Natural killer cell (primary cell): ENCODE measurements at regions of chr18 and their contacts with region 1.

Region 1: DNA sequence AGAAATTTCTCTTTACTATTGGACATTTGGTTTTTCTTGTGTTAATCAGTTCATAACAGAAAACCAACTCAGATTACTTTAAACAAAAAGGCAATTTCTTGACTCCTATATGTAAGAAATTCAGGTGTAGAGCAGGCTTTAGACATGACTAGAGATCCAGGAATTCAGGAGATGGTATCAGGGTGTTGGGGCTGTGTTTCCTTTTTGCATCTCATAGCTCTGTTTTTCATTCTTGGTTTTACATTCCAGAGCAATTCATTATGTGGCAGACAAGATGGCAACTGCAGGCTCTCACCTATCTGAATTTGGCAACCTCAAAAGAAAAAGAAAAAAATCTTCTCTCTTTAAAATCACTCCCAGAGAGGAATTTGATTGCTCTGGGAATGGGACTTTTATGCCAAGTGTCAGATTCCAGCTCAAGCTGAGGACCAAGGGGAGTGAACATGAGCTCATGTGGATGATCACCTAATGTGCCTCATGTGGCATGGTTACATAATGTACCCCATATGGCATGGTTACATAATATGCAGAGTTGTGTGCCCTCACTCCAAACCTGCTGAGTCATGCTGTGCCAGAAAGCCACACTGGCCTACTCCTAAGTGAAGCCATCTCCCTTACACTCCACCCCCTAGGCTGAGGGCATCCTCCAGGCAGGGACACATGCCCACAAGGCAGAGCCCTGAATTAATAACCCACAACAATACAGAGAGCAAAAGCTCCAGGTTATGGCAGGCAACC is 282.7 kb downstream of the MBD2 start:
- DNase-seq: no peak
- ATAC-seq: no peak
- H3K4me3 ChIP-seq: no peak overlapping the region
- H3K4me3 Mint-ChIP-seq: no peak overlapping the region
- H3K27ac ChIP-seq: no peak overlapping the region
- H3K27ac Mint-ChIP-seq: no peak overlapping the region
- H3K4me1 ChIP-seq: no peaks in the 10 kb centered on the region
- H3K4me1 Mint-ChIP-seq: no peaks in the 10 kb centered on the region
- H3K27me3 ChIP-seq: no peaks in the 10 kb centered on the region
- H3K27me3 Mint-ChIP-seq: no peaks in the 10 kb centered on the region
- CTCF ChIP-seq: no peak

Region 2: DNA sequence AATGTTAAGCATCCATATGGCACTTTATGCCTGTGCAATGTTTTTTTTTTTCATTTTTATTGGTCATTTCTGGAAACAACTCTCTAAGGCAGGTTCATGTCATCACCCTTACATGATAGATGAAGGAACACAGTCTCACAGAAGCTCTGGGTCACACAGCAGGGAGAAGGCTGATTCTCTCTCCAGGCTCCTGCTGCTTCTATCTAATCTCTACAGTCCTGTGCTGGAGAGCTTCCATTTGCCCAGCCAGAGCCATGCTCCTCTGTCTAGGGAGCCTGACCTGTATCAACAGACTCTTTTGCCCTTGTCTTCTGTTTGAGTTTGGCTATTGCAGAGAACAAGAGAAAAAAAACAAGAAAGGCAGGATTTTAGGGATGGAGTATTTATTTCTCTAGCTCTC is 302.1 kb before region 1 on chr18:
- intact Hi-C with region 1: no loop called
- DNase-seq: no peak
- ATAC-seq: no peak
- H3K4me3 ChIP-seq: no peak overlapping the region
- H3K4me3 Mint-ChIP-seq: no peak overlapping the region
- H3K27ac ChIP-seq: no peak overlapping the region
- H3K27ac Mint-ChIP-seq: no peak overlapping the region
- H3K4me1 ChIP-seq: no peaks in the 10 kb centered on the region
- H3K4me1 Mint-ChIP-seq: no peaks in the 10 kb centered on the region
- H3K27me3 ChIP-seq: no peaks in the 10 kb centered on the region
- H3K27me3 Mint-ChIP-seq: no peaks in the 10 kb centered on the region
- CTCF ChIP-seq: no peak

Region 3: DNA sequence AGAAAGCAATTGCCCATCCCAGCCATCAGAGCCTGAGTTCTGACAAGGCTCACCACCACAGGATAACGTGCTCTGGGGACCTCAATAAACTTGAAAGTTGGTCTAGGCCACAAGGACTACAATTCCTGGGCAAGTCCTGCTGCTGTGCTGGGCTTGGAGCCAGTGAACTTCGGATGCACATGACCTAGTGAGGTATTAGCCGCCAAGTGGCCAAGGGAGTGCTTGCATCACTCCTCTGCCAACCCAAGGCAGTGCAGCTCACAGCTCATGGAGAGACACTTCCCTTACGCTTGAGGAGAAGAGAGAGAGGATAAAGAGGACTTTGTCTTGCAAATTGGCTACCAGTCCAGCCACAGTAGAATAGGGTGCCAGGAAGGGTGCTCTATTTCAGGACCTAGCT is 63.1 kb after region 1 on chr18:
- intact Hi-C with region 1: loop called (anchors 10 kb)
- DNase-seq: no peak
- ATAC-seq: no peak
- H3K4me3 ChIP-seq: no peak overlapping the region
- H3K4me3 Mint-ChIP-seq: no peak overlapping the region
- H3K27ac ChIP-seq: no peak overlapping the region
- H3K27ac Mint-ChIP-seq: no peak overlapping the region
- H3K4me1 ChIP-seq: no peaks in the 10 kb centered on the region
- H3K4me1 Mint-ChIP-seq: no peaks in the 10 kb centered on the region
- H3K27me3 ChIP-seq: no peaks in the 10 kb centered on the region
- H3K27me3 Mint-ChIP-seq: no peaks in the 10 kb centered on the region
- CTCF ChIP-seq: no peak